HCT116 (cell line): ENCODE measurements at regions of chr18 and their contacts with region 1.

Region 1: GRCh38 chr18:57029761-57030160 is 117.1 kb upstream of the BOD1L2 start:
- DNase-seq: no peak
- ATAC-seq: peak; percentile 75
- H3K4me3 ChIP-seq: no peak overlapping the region
- H3K27ac ChIP-seq: no peak overlapping the region
- H3K4me1 ChIP-seq: no peaks in the 10 kb centered on the region
- H3K27me3 ChIP-seq: no peaks in the 10 kb centered on the region
- CTCF ChIP-seq: peak in 2 of 3 experiments; percentile 14 to 18; a peak in 2 of 6 replicates
- POLR2A ChIP-seq: no peak
- RAD21 ChIP-seq: peak; percentile 40; the same call in 1 of the 2 replicates

Region 2: DNA sequence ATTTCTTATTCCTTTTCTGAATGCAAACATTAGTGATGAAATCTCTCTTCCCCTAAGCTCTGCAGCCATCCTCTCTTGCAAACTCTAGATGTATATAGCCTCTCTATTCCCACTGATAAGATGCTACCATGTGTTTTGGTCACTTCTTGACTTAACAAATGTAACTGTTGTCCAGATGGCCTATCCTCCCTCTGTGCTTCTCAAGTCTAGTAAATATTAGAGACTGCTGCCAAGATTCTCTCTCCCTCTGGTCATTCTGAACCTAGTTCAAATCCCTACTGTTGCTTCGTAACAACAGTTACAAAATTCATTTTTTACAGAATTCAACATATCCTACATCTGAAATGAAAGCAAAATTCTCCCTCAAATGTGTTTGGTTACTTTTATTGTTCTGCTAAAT is 548.0 kb before region 1 on chr18:
- CTCF ChIA-PET with region 1: no interaction called
- POLR2A ChIA-PET with region 1: no interaction called
- RAD21 ChIA-PET with region 1: no interaction called
- intact Hi-C with region 1: no loop called
- DNase-seq: no peak
- ATAC-seq: no peak
- H3K4me3 ChIP-seq: no peak overlapping the region
- H3K27ac ChIP-seq: no peak overlapping the region
- H3K4me1 ChIP-seq: no peaks in the 10 kb centered on the region
- H3K27me3 ChIP-seq: no peaks in the 10 kb centered on the region
- CTCF ChIP-seq: no peak
- POLR2A ChIP-seq: no peak
- RAD21 ChIP-seq: no peak

Region 3: DNA sequence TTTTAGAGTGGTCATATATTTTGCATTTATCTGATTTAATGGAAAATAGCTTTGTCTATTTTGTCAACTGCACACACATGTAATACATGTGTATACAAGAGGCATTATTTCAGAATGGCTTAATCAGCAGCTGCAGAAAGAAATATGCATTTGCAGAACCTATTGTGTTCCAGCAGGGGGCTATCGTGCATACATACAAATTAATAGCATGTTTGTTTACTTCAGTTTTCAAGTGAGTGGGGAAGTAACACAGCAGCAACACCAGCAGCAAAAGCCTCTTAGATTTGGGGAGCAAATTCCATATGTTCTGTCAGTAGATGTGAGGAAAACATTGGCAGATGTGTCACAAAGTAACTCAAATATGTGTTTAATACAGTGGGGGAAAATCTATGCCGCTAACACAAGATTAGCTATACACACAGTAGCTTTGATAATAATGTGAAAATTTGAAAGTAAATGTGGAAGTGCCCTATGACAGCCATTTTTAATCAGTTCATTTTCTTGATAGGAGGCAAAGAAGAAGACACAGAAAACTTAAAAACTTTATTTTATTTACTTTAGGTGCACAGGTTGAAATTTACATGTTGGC is 160.5 kb before region 1 on chr18:
- CTCF ChIA-PET with region 1: interaction called, 5 read pairs
- POLR2A ChIA-PET with region 1: no interaction called
- RAD21 ChIA-PET with region 1: no interaction called
- intact Hi-C with region 1: loop called (anchors 5 kb)
- DNase-seq: peak; percentile 55
- ATAC-seq: peak; percentile 75; the same call in 1 of the 2 replicates
- H3K4me3 ChIP-seq: no peak overlapping the region
- H3K27ac ChIP-seq: no peak overlapping the region
- H3K4me1 ChIP-seq: no peaks in the 10 kb centered on the region
- H3K27me3 ChIP-seq: no peaks in the 10 kb centered on the region
- CTCF ChIP-seq: peak; percentile 42 to 84 (median 69); a peak in 5 of 6 replicates
- POLR2A ChIP-seq: no peak
- RAD21 ChIP-seq: peak; percentile 66